SK-N-SH (cell line): ENCODE measurements at regions of chr14 and their contacts with region 1.

Region 1: GRCh38 chr14:88106377-88106776 is 101.4 kb downstream of the GPR65 start:
- DNase-seq: no peak
- H3K4me3 ChIP-seq: no peak overlapping the region
- H3K27ac ChIP-seq: no peak overlapping the region
- H3K4me1 ChIP-seq: no peaks in the 10 kb centered on the region
- H3K27me3 ChIP-seq: no peaks in the 10 kb centered on the region
- CTCF ChIP-seq: no peak
- EP300 ChIP-seq: no peak
- RAD21 ChIP-seq: no peak

Region 2: GRCh38 chr14:87916103-87916885 is 190.1 kb before region 1 on chr14:
- CTCF ChIA-PET with region 1: no interaction called
- POLR2A ChIA-PET with region 1: no interaction called
- DNase-seq: peak; percentile 5
- H3K4me3 ChIP-seq: no peak overlapping the region
- H3K27ac ChIP-seq: no peak overlapping the region
- H3K4me1 ChIP-seq: no peaks in the 10 kb centered on the region
- H3K27me3 ChIP-seq: no peaks in the 10 kb centered on the region
- CTCF ChIP-seq: no peak
- EP300 ChIP-seq: no peak
- RAD21 ChIP-seq: no peak

Region 3: DNA sequence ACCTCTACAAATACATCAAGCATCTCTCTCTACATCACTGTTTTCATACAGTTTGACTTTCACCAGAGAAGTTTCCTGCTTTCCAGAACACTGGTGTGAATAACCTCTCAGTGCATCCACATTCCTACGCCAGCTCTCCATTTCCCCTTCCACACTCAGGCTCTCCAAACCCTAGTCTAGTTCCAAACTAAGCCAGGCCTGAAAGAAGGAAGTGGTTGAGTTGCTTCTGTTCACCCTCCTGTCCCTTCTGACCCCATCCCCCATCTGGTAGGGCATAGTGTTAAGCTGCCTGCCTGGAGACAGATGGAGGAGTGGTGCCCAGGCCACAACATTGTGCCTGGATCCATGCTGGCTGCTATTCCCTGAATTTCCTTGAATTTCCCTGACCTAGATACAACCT is 30.9 kb after region 1 on chr14:
- CTCF ChIA-PET with region 1: no interaction called
- POLR2A ChIA-PET with region 1: no interaction called
- DNase-seq: no peak
- H3K4me3 ChIP-seq: no peak overlapping the region
- H3K27ac ChIP-seq: no peak overlapping the region
- H3K4me1 ChIP-seq: no peaks in the 10 kb centered on the region
- H3K27me3 ChIP-seq: no peaks in the 10 kb centered on the region
- CTCF ChIP-seq: no peak
- EP300 ChIP-seq: no peak
- RAD21 ChIP-seq: no peak

Region 4: GRCh38 chr14:88168498-88169165 is 62.3 kb after region 1 on chr14:
- CTCF ChIA-PET with region 1: interaction called, 10 read pairs
- POLR2A ChIA-PET with region 1: no interaction called
- DNase-seq: peak; percentile 57
- H3K4me3 ChIP-seq: no peak overlapping the region
- H3K27ac ChIP-seq: no peak overlapping the region
- H3K4me1 ChIP-seq: no peaks in the 10 kb centered on the region
- H3K27me3 ChIP-seq: no peaks in the 10 kb centered on the region
- CTCF ChIP-seq: peak; percentile 67
- EP300 ChIP-seq: no peak
- RAD21 ChIP-seq: peak; percentile 62